Activated CD4-positive, alpha-beta T cell treated with anti-CD3 and anti-CD28 coated beads for 36 hours (primary cell): ENCODE measurements at regions of chr9 and their contacts with region 1.

Region 1: GRCh38 chr9:21239911-21240310 is at the start of gene IFNA14:
- DNase-seq: no peak
- ATAC-seq: no peak
- H3K4me3 Mint-ChIP-seq: no peak within 1 kb of the TSS
- H3K27ac Mint-ChIP-seq: no peak within 1 kb of the TSS
- H3K4me1 Mint-ChIP-seq: peaks cover 10% of the 10 kb centered on the region
- H3K27me3 Mint-ChIP-seq: peaks cover 7% of the 10 kb centered on the region
- total RNA-seq, gene IFNA14: not detected

Region 2: GRCh38 chr9:19231126-19231903 is 2008.6 kb before region 1 on chr9:
- CTCF ChIA-PET with region 1: no interaction called
- POLR2A ChIA-PET with region 1: no interaction called
- intact Hi-C with region 1: no loop called
- DNase-seq: peak; percentile 50
- ATAC-seq: peak; percentile 16
- H3K4me3 Mint-ChIP-seq: no peak overlapping the region
- H3K27ac Mint-ChIP-seq: no peak overlapping the region
- H3K4me1 Mint-ChIP-seq: peaks cover 16% of the 10 kb centered on the region
- H3K27me3 Mint-ChIP-seq: no peaks in the 10 kb centered on the region

Region 3: GRCh38 chr9:21317956-21318923 is 78.3 kb after region 1 on chr9:
- CTCF ChIA-PET with region 1: interaction called, 3 read pairs
- POLR2A ChIA-PET with region 1: no interaction called
- intact Hi-C with region 1: loop called in 1 of 2 experiments (anchors 5 kb)
- DNase-seq: peak; percentile 59
- ATAC-seq: peak; percentile 78
- H3K4me3 Mint-ChIP-seq: no peak overlapping the region
- H3K27ac Mint-ChIP-seq: no peak overlapping the region
- H3K4me1 Mint-ChIP-seq: peaks cover 5% of the 10 kb centered on the region
- H3K27me3 Mint-ChIP-seq: no peaks in the 10 kb centered on the region